ENCODE measurements at regions of chr18 and their contacts with region 1.

Region 1: DNA sequence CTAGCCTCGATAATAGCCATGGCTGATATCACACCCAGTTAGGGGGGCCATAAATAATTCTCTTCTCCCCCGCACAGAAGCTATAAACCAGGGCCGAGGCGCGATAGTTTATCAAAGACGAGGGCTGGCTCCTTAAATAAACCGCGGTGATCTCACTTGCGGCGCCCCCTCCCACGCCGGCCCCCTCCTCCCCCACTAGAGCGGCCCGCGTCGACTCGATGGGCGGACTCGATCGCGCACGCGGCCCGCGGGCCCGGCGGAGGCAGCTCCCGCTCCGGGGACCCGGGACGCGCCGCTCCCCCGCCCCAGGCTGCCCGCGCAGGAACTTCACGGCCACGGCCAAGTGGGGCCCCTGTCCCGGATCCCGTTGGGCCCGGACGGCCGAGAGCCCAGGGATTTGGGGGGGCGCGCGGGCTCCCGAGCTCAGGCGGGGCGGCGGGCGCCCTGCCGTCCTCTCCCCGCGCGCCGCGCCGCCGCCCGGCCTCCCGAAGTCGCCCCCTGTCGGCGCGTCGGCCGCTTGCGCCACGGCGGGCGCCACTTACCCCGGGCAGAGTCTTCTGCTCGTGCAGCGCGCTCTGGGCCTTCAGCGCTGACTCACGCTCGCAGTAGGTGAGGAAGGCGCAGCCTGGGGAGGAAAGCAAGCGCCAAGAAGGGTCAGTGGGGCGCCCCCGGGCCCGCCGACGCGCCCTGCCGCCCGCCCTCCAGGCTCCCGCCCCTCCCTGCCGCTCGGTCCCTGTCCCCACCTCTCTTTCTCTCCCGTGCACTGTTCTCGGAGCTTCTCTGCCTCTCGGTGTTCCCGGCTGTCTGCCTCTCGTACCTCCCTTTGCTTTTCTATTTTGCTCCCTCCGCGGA is 80.4 kb downstream of the CELF4 start:
- DNase-seq: peak; percentile 9
- H3K4me3 Mint-ChIP-seq: no peak overlapping the region
- H3K27ac Mint-ChIP-seq: no peak overlapping the region
- H3K4me1 Mint-ChIP-seq: peaks cover 1% of the 10 kb centered on the region
- H3K27me3 Mint-ChIP-seq: peaks cover 47% of the 10 kb centered on the region

Region 2: DNA sequence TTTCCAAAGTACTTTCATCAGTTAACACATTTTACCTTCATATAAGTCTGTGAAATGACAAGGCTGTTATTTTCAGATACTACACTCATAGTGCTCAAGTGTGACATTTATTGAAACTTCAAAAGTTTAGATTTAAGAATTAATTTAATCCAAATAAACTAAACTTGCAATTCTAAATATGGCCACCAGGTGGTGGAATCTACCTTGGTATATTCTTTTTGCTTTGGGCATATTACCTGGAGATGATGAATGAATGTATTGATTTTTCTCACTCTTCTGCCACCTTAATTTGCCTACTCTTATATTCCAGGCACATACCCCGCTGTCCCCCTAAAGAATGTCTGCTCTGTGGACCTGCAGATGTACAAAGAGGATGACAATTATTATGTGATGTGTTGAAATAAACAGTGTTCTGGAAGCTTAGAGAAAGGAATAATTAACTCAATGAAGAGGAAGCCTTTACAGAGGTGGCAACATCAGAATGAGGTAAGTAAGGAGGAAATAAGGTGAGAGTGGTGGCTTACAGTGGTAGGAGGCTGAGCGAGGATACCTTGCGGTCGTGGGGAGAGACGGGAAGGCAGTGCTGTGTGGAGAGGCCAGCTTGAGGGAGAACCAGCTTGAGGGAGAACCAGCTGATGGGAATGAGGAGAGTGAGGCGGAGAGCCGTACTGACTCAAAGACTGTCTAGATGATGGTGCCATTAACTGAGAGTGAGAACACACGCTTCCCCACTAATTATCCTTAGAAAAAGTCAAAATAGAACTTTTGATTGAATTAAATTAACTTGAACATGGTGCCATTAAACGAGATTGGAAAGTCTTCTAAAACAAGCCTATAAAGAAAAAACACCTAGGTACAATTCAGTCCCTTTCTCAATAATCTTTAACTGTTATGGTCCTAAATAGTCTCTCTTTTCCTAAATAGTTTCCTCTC is 99.1 kb before region 1 on chr18:
- intact Hi-C with region 1: loop called (anchors 10 kb)
- DNase-seq: no peak
- H3K4me3 Mint-ChIP-seq: no peak overlapping the region
- H3K27ac Mint-ChIP-seq: no peak overlapping the region
- H3K4me1 Mint-ChIP-seq: no peaks in the 10 kb centered on the region
- H3K27me3 Mint-ChIP-seq: peaks cover 2% of the 10 kb centered on the region

Region 3: DNA sequence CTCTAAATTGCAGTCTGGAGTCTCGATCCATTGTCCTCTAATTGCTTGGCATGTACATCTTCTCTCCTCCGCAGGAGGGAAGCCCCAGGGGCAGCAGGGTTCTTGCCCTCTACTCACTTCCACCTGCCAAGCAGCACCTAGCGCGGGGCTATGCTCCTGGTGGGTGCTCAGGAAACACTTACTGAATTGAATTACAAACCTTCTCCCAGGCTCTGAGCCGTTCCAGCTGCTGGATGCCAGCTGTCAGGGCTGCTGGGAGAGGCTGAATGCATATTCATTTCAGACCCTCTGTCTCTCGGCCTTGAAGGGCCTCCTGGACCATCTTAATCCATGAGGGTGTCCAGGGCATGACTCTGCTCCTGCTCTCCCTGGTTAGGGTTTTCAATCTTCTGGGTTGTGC is 13.6 kb before region 1 on chr18:
- intact Hi-C with region 1: no loop called
- DNase-seq: no peak
- H3K4me3 Mint-ChIP-seq: no peak overlapping the region
- H3K27ac Mint-ChIP-seq: no peak overlapping the region
- H3K4me1 Mint-ChIP-seq: no peaks in the 10 kb centered on the region
- H3K27me3 Mint-ChIP-seq: no peaks in the 10 kb centered on the region

Region 4: DNA sequence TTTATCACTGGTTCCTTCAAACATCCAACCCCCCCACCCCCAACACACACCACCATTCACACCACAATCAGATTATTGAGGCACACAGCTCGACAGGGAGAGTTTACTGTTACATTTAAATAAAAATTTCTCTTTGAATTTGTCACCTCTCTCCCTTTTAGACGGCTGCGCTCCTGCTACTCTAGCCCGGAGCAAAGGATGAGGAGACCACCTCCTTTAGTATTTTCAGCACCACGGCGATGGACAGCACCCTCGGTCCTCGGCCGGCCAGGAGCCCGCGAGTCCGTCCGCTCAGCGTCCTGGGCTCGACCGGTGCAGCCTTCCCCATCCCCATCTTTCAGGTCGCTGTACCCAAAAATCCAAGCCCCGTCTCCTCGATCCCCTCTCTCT is 79.5 kb after region 1 on chr18:
- intact Hi-C with region 1: loop called (anchors 10 kb)
- DNase-seq: no peak
- H3K4me3 Mint-ChIP-seq: no peak overlapping the region
- H3K27ac Mint-ChIP-seq: no peak overlapping the region
- H3K4me1 Mint-ChIP-seq: peaks cover 3% of the 10 kb centered on the region
- H3K27me3 Mint-ChIP-seq: peaks cover 57% of the 10 kb centered on the region

Measured in activated T-helper 2 cell treated with anti-CD3 and anti-CD28 coated beads, Interferon-gamma antibody, Interleukin-2, Interleukin-4, amounts not matched to agents 10 μg/mL and 5 μg/mL and 100 μg/mL, durations not matched to agents 14 hours and 24 hours and 36 hours (primary cell).